ENCODE measurements at regions of chr2 and their contacts with region 1.

Region 1: GRCh38 chr2:201118121-201118960 is 2.4 kb downstream of the CFLAR start:
- DNase-seq: peak; percentile 53 to 95 (median 74)

Region 2: GRCh38 chr2:201071479-201072200 is 46.7 kb before region 1 on chr2 and contains the starts of genes HYCC2 and NDUFB3:
- intact Hi-C with region 1: loop called (anchors 2 kb)
- DNase-seq: peak; percentile 83 to 98 (median 90)